ENCODE measurements at regions of chr9 and their contacts with region 1.

Region 1: GRCh38 chr9:8486095-8486494 is 686.5 kb upstream of the DMAC1 start:
- DNase-seq: no peak
- H3K4me3 ChIP-seq: no peak overlapping the region
- H3K27ac ChIP-seq: no peak overlapping the region
- H3K4me1 ChIP-seq: no peaks in the 10 kb centered on the region
- H3K27me3 ChIP-seq: no peaks in the 10 kb centered on the region
- CTCF ChIP-seq: peak in 1 of 3 experiments; percentile 44

Region 2: GRCh38 chr9:8895861-8896224 is 409.7 kb after region 1 on chr9:
- intact Hi-C with region 1: loop called (anchors 2 kb)
- DNase-seq: no peak
- H3K4me3 ChIP-seq: peak overlapping the region in 1 of 2 donors; percentile 23
- H3K27ac ChIP-seq: no peak overlapping the region
- H3K4me1 ChIP-seq: no peaks in the 10 kb centered on the region
- H3K27me3 ChIP-seq: no peaks in the 10 kb centered on the region
- CTCF ChIP-seq: peak; percentile 32 to 75 (median 55)

Measured in ascending aorta (tissue), 2 donors.